ENCODE measurements at regions of chr4 and their contacts with region 1.

Region 1: GRCh38 chr4:76213415-76214176 is at the start of gene SCARB2:
- DNase-seq: peak; percentile 90
- H3K4me3 ChIP-seq: peak within 1 kb of the TSS; percentile 37 to 94 (median 85)
- H3K27ac ChIP-seq: peak within 1 kb of the TSS; percentile 57
- H3K4me1 ChIP-seq: peaks cover 36% of the 10 kb centered on the region
- H3K27me3 ChIP-seq: no peaks in the 10 kb centered on the region
- CTCF ChIP-seq: no peak
- POLR2A ChIP-seq: peak; percentile 93
- total RNA-seq, gene SCARB2: 116 and 122 TPM in 2 replicates

Region 2: GRCh38 chr4:75989846-75990528 is 223.6 kb before region 1 on chr4:
- CTCF ChIA-PET with region 1: no interaction called
- POLR2A ChIA-PET with region 1: no interaction called
- dilution Hi-C with region 1: no loop called
- intact Hi-C with region 1: no loop called
- DNase-seq: peak; percentile 42
- H3K4me3 ChIP-seq: peak overlapping the region; percentile 61 to 92 (median 91)
- H3K27ac ChIP-seq: peak overlapping the region; percentile 84
- H3K4me1 ChIP-seq: peaks cover 10% of the 10 kb centered on the region
- H3K27me3 ChIP-seq: peaks cover 6 to 8% of the 10 kb centered on the region in 2 experiments
- CTCF ChIP-seq: no peak
- POLR2A ChIP-seq: no peak

Region 3: GRCh38 chr4:76148142-76148865 is 65.3 kb before region 1 on chr4 and contains the start of gene NUP54:
- CTCF ChIA-PET with region 1: no interaction called
- POLR2A ChIA-PET with region 1: no interaction called
- dilution Hi-C with region 1: no loop called
- intact Hi-C with region 1: loop called (anchors 1 kb)
- DNase-seq: peak; percentile 97
- H3K4me3 ChIP-seq: peak within 1 kb of the TSS; percentile 87 to 91 (median 89)
- H3K27ac ChIP-seq: peak within 1 kb of the TSS; percentile 71
- H3K4me1 ChIP-seq: peaks cover 23% of the 10 kb centered on the region
- H3K27me3 ChIP-seq: no peaks in the 10 kb centered on the region
- CTCF ChIP-seq: no peak
- POLR2A ChIP-seq: peak; percentile 64
- total RNA-seq, gene NUP54: 45.7 and 49.9 TPM in 2 replicates

Region 4: GRCh38 chr4:76198411-76199237 is 15.0 kb before region 1 on chr4:
- CTCF ChIA-PET with region 1: interaction called, 16 read pairs
- POLR2A ChIA-PET with region 1: no interaction called
- dilution Hi-C with region 1: no loop called
- intact Hi-C with region 1: loop called (anchors 1 kb)
- DNase-seq: peak; percentile 95
- H3K4me3 ChIP-seq: no peak overlapping the region
- H3K27ac ChIP-seq: peak overlapping the region; percentile 71
- H3K4me1 ChIP-seq: peaks cover 33% of the 10 kb centered on the region
- H3K27me3 ChIP-seq: no peaks in the 10 kb centered on the region
- CTCF ChIP-seq: no peak
- POLR2A ChIP-seq: no peak

Region 5: GRCh38 chr4:76233957-76234678 is 20.5 kb after region 1 on chr4:
- CTCF ChIA-PET with region 1: no interaction called
- POLR2A ChIA-PET with region 1: no interaction called
- dilution Hi-C with region 1: no loop called
- intact Hi-C with region 1: no loop called
- DNase-seq: no peak
- H3K4me3 ChIP-seq: no peak overlapping the region
- H3K27ac ChIP-seq: no peak overlapping the region
- H3K4me1 ChIP-seq: no peaks in the 10 kb centered on the region
- H3K27me3 ChIP-seq: peaks cover 13 to 25% of the 10 kb centered on the region in 2 experiments
- CTCF ChIP-seq: no peak
- POLR2A ChIP-seq: no peak

Region 6: DNA sequence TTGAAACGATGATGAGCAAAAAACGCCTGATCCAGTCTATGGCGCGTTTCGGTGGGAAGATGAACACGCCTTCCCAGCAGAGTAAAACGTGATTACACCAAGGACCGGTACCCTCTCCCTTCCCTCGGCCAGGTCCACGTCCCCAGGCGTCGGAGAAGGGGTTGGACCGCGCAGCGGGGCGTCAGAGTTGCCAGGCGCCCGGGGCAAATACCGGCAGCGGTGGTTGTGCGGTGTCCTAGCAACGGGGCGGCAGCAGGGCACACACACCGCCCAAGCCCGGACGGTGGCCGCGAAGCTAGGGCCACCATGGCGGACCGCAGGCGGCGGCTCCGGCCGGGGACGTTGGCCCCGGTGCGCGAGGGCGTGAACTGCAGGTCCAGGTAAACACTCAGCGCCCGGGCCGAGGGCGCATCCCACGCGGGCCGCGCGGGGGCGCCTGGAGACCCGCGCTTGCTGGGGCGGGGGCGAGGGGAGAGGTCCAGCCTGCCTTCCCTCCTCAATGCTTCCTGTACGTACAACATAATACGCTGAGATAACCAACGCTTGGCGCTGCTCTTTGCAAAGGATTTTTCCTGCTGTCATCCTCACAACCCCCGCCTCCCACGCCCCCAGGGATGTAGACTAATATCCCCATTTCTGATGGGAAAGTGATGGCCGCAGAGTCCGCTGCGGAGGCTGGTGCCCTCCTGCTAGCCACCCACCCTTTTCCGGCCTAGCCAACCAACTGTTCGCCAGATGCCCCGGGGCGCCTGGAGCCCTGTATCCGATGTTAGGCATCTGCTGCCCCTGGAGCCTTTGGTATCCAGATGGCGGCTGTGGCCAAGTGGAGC is 38.1 kb after region 1 on chr4 and contains the start of gene FAM47E:
- CTCF ChIA-PET with region 1: no interaction called
- POLR2A ChIA-PET with region 1: no interaction called
- dilution Hi-C with region 1: no loop called
- intact Hi-C with region 1: loop called (anchors 2 kb)
- DNase-seq: peak; percentile 44
- H3K4me3 ChIP-seq: peak within 1 kb of the TSS in 2 of 3 experiments; percentile 1 to 28
- H3K27ac ChIP-seq: no peak within 1 kb of the TSS
- H3K4me1 ChIP-seq: peaks cover 3% of the 10 kb centered on the region
- H3K27me3 ChIP-seq: peaks cover 50 to 70% of the 10 kb centered on the region in 2 experiments
- CTCF ChIP-seq: peak; percentile 17 to 44
- POLR2A ChIP-seq: no peak
- total RNA-seq, gene FAM47E: 0.11 TPM in 1 of 2 replicates, not detected in the other

Region 7: DNA sequence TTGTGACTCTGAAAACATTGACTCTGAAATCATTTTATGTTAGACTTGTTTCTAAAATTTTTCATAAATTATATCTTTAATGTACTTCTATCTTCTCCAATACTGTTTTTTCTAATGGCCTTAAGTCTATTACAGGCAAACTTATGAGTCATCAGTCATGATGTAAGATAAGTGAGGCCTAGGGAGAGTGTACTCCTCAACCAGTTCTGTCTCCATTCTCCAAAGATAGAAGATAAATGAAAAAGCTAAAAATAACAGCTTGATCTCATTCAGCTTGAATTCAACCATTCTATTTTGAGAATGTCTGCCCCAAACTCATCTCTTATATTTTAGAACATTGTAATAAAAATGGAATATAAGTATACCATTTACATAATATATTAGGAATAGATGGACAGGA is 127.5 kb after region 1 on chr4:
- CTCF ChIA-PET with region 1: no interaction called
- POLR2A ChIA-PET with region 1: no interaction called
- dilution Hi-C with region 1: no loop called
- intact Hi-C with region 1: no loop called
- DNase-seq: no peak
- H3K4me3 ChIP-seq: no peak overlapping the region
- H3K27ac ChIP-seq: no peak overlapping the region
- H3K4me1 ChIP-seq: no peaks in the 10 kb centered on the region
- H3K27me3 ChIP-seq: peaks cover 0 to 6% of the 10 kb centered on the region in 2 experiments
- CTCF ChIP-seq: no peak
- POLR2A ChIP-seq: no peak

Region 8: GRCh38 chr4:76420762-76421581 is 207.4 kb after region 1 on chr4 and contains the start of gene CCDC158:
- CTCF ChIA-PET with region 1: no interaction called
- POLR2A ChIA-PET with region 1: no interaction called
- dilution Hi-C with region 1: no loop called
- intact Hi-C with region 1: no loop called
- DNase-seq: no peak
- H3K4me3 ChIP-seq: peak within 1 kb of the TSS in 2 of 3 experiments; percentile 21 to 25
- H3K27ac ChIP-seq: no peak within 1 kb of the TSS
- H3K4me1 ChIP-seq: peaks cover 2% of the 10 kb centered on the region
- H3K27me3 ChIP-seq: peaks cover 19 to 32% of the 10 kb centered on the region in 2 experiments
- CTCF ChIP-seq: no peak
- POLR2A ChIP-seq: no peak
- total RNA-seq, gene CCDC158: not detected in 2 replicates